ENCODE measurements at regions of chr15 and their contacts with region 1.

Region 1: DNA sequence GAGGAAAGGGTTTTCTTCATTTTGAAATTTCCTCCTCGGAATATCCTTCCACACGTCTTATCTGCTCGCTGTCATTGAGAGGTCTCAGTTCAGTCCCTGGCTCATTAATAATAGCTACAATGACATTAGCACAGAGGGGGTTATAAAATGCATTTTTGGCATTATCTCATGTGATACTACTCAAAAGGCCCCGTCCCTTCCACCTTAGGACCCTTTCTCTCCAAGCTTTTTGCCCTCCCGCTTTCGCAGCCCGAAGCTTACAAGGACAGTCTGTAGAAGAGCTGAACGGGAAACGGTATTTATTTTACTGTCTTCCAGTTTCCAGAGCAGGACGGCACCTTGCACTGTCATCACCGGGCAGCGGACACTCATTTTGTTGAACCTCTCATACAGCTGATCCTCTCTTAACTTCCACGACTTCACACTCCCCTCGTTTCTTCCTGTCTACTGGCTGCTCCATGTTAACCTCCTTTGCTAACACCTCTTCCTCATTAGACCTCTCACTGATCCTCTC is 5.6 kb upstream of the PLEKHO2 start:
- DNase-seq: no peak
- ATAC-seq: peak in 7 of 8 donors; percentile 0 to 22 (median 3)
- H3K4me3 ChIP-seq: peak overlapping the region in 7 of 10 donors; percentile 8 to 41 (median 35)
- H3K27ac ChIP-seq: peak overlapping the region in 9 of 10 donors; percentile 45 to 81 (median 72)
- H3K4me1 ChIP-seq: peaks cover 3 to 41% (median 20%) of the 10 kb centered on the region in 9 donors
- H3K27me3 ChIP-seq: no peaks in the 10 kb centered on the region
- CTCF ChIP-seq: peak in 2 of 9 donors; percentile 2 to 5

Region 2: DNA sequence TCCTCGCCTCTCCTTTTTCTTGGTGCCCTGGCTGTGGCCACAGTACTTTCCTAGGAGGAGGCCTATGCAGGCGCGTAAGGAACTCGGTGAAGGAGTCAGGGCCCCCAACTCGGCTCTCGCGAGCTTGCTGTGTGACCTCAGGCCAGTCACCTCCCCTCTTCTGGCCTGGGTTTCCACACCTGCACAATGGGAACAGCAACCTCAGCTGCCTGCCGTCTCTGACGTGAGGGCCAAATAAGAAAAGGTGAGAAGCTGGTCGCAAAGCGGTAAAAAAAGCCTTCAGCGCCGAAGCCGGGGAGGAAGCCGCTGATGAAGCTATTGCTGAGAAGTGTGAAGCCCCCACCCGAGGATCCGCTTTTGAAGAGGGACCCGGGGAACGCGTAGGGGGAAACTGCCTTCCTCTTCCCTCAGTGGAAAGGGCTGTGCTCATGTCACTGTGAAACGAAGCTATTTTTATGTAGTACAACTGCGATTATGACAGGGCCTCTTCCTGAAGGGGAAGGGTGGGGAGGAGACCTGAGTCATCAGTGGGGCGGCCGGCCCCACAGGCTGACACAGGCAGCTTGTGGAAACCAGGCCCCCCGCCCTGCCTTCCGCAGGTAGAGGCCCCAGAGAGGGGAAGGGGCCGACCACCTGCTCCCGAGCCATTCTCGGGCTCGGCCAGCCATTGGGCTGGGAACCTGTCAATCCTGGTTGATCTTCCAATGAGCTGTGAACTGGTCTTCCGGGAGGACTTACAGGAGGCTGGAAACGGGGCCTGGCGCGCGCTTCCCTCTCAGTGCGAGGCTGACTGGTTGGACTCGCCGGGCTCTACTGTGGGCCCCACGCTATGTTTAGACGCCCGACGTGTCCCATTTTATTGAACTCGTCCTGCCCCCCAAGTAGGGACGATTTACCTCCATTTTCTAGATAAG is 57.7 kb after region 1 on chr15:
- intact Hi-C with region 1: loop called in 6 of 10 experiments (anchors 2 to 5 kb)
- DNase-seq: peak; percentile 96 to 97
- ATAC-seq: peak; percentile 76 to 91 (median 87)
- H3K4me3 ChIP-seq: peak overlapping the region in 9 of 10 donors; percentile 1 to 48 (median 38)
- H3K27ac ChIP-seq: peak overlapping the region; percentile 64 to 98 (median 89)
- H3K4me1 ChIP-seq: peaks cover 22 to 78% (median 55%) of the 10 kb centered on the region in 9 donors
- H3K27me3 ChIP-seq: no peaks in the 10 kb centered on the region
- CTCF ChIP-seq: no peak